ENCODE measurements at regions of chr14 and their contacts with region 1.

Region 1: DNA sequence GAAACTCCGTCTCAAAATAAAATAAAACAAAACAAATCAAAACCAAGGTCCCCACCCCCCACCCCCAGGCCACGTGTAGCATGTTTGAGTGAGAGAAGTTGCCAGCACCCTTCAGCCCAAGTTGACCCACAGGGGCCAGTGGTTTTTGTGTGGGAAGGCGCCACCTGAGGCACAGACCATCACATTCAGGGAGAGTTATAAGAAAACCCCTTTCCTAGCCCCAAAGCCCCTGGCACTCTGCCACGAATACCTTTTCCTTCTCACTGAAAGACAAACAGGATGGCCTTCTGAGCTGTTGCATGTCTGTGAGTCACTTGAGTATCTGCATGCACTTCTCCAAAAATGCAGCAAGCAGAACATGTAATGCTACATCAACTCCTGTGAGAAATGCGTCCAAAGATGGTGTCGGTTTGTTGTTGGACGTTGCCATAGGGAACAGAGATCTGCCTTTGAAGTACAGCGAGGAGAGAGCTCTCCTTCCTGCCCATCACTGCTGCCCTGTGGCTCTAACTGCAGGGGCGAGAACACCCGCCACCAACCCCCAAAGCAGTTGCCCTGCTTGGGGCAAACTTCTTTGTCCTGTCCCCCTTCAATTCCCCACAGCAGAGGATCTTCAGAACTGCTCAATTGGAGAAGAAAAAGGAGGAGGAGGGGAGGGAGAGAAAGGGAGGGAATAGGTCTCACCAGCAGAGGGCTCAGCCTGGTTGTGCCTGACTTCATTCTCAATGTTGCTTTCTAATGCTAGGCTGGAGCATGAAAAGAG is 2.7 kb upstream of the TRAF3 start:
- DNase-seq: peak; percentile 57
- H3K4me3 Mint-ChIP-seq: peak overlapping the region; percentile 24
- H3K27ac Mint-ChIP-seq: peak overlapping the region; percentile 90
- H3K4me1 Mint-ChIP-seq: peaks cover 40% of the 10 kb centered on the region
- H3K27me3 Mint-ChIP-seq: no peaks in the 10 kb centered on the region

Region 2: GRCh38 chr14:102694530-102695166 is 79.9 kb before region 1 on chr14:
- intact Hi-C with region 1: loop called (anchors 1 kb)
- DNase-seq: peak; percentile 37
- H3K4me3 Mint-ChIP-seq: no peak overlapping the region
- H3K27ac Mint-ChIP-seq: no peak overlapping the region
- H3K4me1 Mint-ChIP-seq: peaks cover 19% of the 10 kb centered on the region
- H3K27me3 Mint-ChIP-seq: no peaks in the 10 kb centered on the region

Region 3: DNA sequence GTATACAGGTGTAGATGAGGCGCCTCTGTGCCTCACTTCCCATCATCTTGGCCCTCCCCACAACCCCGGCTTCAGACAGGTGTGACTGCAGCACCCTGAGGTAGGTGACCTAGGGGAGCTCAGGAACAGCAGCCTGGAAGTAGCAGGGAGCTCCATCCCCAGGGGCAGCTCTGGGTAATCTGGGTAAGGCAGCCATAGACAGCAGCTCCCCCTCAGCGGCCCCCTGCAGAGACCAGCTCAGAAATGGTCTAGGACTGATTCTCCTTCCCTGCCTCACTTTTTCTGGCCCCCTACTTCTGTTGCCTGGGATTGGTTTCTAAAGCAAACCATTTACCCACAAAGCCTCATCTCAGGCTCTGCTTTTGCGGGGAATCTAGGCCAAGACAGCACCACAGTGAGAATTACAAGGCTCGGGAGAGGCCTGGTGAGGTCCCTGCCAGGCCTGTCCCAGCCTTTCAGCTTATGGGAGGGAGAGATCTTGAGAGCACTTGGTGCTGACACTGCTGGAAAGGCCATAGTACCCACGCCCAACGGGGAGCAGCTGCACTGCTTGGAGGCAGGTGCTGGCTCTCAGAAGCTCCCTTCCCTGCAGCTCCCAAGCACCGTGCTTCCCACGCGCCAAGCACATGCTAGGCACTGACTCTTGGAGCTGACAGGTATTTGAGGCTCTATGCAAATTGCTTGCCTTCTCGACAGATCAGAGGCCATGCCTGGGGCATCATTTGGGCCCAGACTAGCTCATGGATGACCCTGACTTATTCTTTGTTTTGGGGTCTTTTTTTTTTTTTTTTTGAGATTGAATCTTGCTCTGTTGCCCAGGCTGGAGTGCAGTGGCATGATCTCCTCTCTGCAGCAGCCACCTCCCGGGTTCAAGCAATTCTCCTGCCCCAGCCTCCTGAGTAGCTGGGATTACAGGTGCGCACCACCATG is 42.4 kb before region 1 on chr14:
- intact Hi-C with region 1: no loop called
- DNase-seq: no peak
- H3K4me3 Mint-ChIP-seq: no peak overlapping the region
- H3K27ac Mint-ChIP-seq: no peak overlapping the region
- H3K4me1 Mint-ChIP-seq: no peaks in the 10 kb centered on the region
- H3K27me3 Mint-ChIP-seq: no peaks in the 10 kb centered on the region

Region 4: GRCh38 chr14:102805371-102806246 is 31.0 kb after region 1 on chr14:
- intact Hi-C with region 1: loop called (anchors 1 kb)
- DNase-seq: peak; percentile 47
- H3K4me3 Mint-ChIP-seq: peak overlapping the region; percentile 71
- H3K27ac Mint-ChIP-seq: peak overlapping the region; percentile 95
- H3K4me1 Mint-ChIP-seq: peaks cover 64% of the 10 kb centered on the region
- H3K27me3 Mint-ChIP-seq: no peaks in the 10 kb centered on the region

Region 5: DNA sequence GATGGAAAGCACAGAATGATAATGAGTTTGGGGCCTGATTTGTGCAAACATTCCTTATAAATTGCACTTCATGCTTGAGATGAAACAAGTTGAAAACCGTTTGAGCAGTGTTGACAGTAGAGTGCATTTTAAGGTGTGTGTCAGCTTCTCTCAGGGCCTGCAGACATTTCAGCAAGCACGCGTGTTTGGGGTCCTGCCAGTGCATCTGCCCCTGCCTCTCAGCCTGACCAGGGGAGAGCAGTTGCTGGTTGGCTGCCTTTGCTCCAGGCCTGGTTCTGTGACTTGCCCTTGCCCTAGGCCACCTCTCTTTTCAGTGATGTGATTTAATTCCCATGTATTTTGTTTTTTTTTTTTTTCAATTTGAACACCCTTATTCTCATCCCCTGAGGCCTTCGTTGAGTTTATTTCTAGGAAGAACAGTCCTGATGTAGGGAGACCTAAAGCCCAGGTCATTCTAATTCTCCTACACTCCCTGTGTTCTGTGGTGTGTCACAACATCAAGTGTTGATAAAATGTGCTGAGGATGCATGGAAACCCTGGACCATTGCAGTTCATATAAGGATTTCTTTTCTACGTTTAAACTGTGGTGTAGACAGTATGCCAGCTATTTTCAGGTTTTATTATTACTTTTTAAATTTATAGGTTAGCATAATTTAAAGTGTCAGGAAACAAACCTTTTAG is 107.8 kb after region 1 on chr14:
- intact Hi-C with region 1: loop called (anchors 2 kb)
- DNase-seq: no peak
- H3K4me3 Mint-ChIP-seq: no peak overlapping the region
- H3K27ac Mint-ChIP-seq: peak overlapping the region; percentile 37
- H3K4me1 Mint-ChIP-seq: peaks cover 10% of the 10 kb centered on the region
- H3K27me3 Mint-ChIP-seq: no peaks in the 10 kb centered on the region

Measured in activated T-helper 1 cell treated with anti-CD3 and anti-CD28 coated beads, Interleukin-12 subunit alpha, Interleukin-12 subunit beta, Interleukin-2, Interleukin-4 antibody, amounts not matched to agents 30 ng/mL and 10 ng/mL and 1 ng/mL, durations not matched to agents 14 hours and 24 hours and 36 hours (primary cell).